GM12878 (cell line): ENCODE measurements at regions of chr19 and their contacts with region 1.

Region 1: DNA sequence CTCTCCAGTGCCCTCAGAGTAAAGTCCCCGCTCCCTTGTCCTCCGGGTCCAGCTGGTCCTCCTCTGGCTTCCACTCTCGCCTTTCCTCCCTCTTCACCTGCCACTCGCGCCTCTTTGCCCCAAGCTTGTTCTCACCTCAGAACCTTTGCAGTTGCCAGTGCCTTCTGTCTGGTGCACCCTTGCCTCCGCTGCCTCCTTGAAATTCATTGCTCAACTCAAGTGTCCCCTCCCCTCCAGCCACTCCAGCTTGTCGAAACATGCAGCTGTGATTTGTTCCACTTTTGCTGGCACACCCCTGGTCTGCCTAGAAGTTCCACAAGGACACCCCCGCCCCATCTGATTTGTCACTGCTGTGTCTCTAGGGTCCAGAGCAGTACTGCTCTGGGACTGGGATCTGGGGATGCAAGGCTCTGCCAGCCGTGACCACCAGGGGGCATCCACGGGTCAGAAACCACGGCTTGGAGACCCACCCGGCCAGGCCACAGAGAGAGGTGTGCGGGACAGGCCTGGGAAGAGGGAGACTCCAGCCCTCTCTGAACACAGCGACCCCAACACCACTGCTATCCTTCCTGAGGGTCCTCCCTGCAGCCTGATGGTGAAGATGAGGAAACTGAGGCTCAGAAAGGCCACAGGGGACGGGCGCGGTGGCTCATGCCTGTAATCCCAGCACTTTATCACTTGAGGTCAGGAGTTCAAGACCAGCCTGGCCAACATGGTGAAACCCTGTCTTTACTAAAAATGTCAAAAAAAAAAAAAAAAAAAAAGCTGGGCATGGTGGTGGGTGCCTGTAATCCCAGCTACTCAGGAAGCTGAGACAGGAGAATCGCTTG is 49.9 kb downstream of the AP1M1 start:
- DNase-seq: peak; percentile 28
- ATAC-seq: peak; percentile 99
- H3K4me3 ChIP-seq: no peak overlapping the region
- H3K27ac ChIP-seq: no peak overlapping the region
- H3K4me1 ChIP-seq: peaks cover 2% of the 10 kb centered on the region; the same call in 1 of the 2 replicates
- H3K27me3 ChIP-seq: no peaks in the 10 kb centered on the region
- CTCF ChIP-seq: peak; percentile 93 to 98 (median 97)
- EP300 ChIP-seq: no peak
- POLR2A ChIP-seq: no peak
- RAD21 ChIP-seq: peak; percentile 98

Region 2: DNA sequence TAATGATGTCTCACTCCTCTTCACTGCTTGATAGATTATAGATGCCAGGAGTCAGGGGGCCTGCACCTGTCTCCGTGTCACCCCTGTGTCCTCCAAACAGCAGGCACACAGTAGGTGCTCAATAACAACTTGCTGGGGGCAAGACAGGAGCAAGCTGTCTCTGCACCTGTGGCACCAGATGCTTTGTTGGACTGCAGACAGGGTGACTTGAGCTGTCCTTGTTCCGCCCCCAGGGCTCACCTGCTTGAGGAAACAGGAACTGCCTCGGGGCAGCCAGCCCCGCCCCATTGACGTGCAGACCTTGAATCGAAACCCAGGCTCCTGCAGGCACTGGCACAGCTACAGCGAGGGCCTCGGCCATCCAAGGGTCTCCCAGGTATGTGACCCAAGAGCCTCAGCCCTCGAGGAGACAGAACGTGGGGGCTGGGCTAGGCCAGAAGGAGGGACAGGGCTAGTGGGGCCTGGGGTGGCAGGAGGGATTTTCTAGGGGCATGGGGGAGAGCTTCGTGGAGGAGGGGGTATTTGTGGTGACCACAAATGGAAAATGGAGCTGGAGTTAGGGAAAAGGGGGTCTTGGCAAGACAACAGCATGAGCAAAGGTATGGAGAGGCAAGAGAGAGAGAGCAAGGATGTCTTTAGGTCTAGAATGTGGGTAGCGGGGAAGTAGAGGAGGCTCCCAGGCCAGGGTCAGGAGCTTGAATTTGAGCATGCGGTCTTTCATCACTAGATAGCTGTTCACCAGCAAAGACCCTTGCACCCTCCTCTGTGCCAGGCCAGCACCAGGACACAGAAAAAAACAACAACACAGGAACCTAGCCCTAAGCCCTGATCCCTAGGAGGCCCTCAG is 103.9 kb before region 1 on chr19 and contains the start of gene HSH2D:
- CTCF ChIA-PET with region 1: no interaction called
- POLR2A ChIA-PET with region 1: no interaction called
- RAD21 ChIA-PET with region 1: no interaction called
- SMC1A ChIA-PET with region 1: no interaction called
- in situ Hi-C with region 1: no loop called
- intact Hi-C with region 1: no loop called
- DNase-seq: peak; percentile 90
- ATAC-seq: peak; percentile 70
- H3K4me3 ChIP-seq: peak within 1 kb of the TSS; percentile 92
- H3K27ac ChIP-seq: peak within 1 kb of the TSS; percentile 99
- H3K4me1 ChIP-seq: peaks cover 37% of the 10 kb centered on the region
- H3K27me3 ChIP-seq: no peaks in the 10 kb centered on the region
- CTCF ChIP-seq: no peak
- EP300 ChIP-seq: peak in 1 of 2 experiments; percentile 81; a peak in 1 of 4 replicates
- POLR2A ChIP-seq: peak; percentile 97
- RAD21 ChIP-seq: no peak
- polyA plus RNA-seq, gene HSH2D: 22.0 to 27.2 TPM

Region 3: DNA sequence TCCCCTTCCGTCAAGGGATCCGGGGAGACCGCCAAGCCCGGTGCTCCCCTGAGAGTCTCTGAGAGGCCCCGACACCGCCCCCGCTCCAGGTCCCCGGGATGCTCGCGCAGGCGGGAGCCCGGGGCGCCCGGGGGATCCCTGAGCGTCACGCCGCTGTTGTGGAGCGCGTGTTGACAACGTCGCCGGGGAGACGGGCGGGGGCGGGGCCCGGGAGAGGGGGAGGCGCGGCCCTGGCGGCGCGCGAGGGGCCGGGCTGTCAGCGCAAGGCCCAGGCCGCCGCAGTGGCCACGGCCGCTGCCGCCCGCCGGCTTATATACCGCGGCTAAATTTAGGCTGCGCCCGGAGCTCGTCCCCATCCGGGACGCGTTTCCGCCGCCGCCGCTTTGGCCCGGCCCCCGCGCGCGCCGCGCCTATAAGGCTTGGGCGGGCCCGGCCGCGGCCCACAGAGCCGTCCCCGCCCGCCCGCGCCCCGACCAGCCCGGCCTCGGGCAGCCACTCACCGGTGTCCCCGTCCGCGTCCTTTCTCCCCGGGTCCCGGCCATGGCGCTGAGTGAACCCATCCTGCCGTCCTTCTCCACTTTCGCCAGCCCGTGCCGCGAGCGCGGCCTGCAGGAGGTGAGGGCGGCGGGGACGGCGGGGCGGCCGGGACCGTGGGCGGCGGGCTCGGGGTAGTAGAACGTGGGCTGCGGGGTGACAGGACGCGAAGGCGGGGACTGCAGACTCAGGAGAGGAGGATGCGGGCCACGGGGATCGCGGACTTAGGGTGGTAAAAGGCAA is 77.0 kb after region 1 on chr19 and contains the start of gene KLF2:
- CTCF ChIA-PET with region 1: interaction called, 26 read pairs
- POLR2A ChIA-PET with region 1: no interaction called
- RAD21 ChIA-PET with region 1: interaction called, 11 read pairs
- SMC1A ChIA-PET with region 1: interaction called, 11 read pairs
- in situ Hi-C with region 1: loop called (anchors 5 kb)
- intact Hi-C with region 1: loop called (anchors 5 kb)
- DNase-seq: no peak
- ATAC-seq: peak; percentile 76
- H3K4me3 ChIP-seq: peak within 1 kb of the TSS; percentile 76; the same call in 1 of the 2 replicates
- H3K27ac ChIP-seq: no peak within 1 kb of the TSS
- H3K4me1 ChIP-seq: peaks cover 25% of the 10 kb centered on the region
- H3K27me3 ChIP-seq: peaks cover 0 to 5% of the 10 kb centered on the region in 2 experiments; a peak in 1 of 4 replicates
- CTCF ChIP-seq: no peak
- EP300 ChIP-seq: peak in 1 of 2 experiments; percentile 72; a peak in 2 of 4 replicates
- POLR2A ChIP-seq: peak; percentile 93
- RAD21 ChIP-seq: no peak
- polyA plus RNA-seq, gene KLF2: 0.16 to 0.71 TPM

Region 4: GRCh38 chr19:16330368-16330801 is 82.8 kb after region 1 on chr19:
- CTCF ChIA-PET with region 1: interaction called, 26 read pairs
- POLR2A ChIA-PET with region 1: no interaction called
- RAD21 ChIA-PET with region 1: interaction called, 11 read pairs
- SMC1A ChIA-PET with region 1: interaction called, 11 read pairs
- in situ Hi-C with region 1: loop called (anchors 5 kb)
- intact Hi-C with region 1: loop called (anchors 5 kb)
- DNase-seq: no peak
- ATAC-seq: peak; percentile 78
- H3K4me3 ChIP-seq: no peak overlapping the region
- H3K27ac ChIP-seq: no peak overlapping the region
- H3K4me1 ChIP-seq: peaks cover 33% of the 10 kb centered on the region
- H3K27me3 ChIP-seq: no peaks in the 10 kb centered on the region
- CTCF ChIP-seq: no peak
- EP300 ChIP-seq: no peak
- POLR2A ChIP-seq: peak; percentile 46; the same call in 1 of the 2 replicates
- RAD21 ChIP-seq: no peak

Region 5: GRCh38 chr19:16338470-16339360 is 91.1 kb after region 1 on chr19:
- CTCF ChIA-PET with region 1: interaction called, 19 read pairs
- POLR2A ChIA-PET with region 1: interaction called, 3 read pairs
- RAD21 ChIA-PET with region 1: interaction called, 6 read pairs
- SMC1A ChIA-PET with region 1: interaction called, 7 read pairs
- in situ Hi-C with region 1: no loop called
- intact Hi-C with region 1: no loop called
- DNase-seq: peak; percentile 59
- ATAC-seq: peak; percentile 69
- H3K4me3 ChIP-seq: peak overlapping the region; percentile 25; the same call in 1 of the 2 replicates
- H3K27ac ChIP-seq: peak overlapping the region; percentile 34; the same call in 1 of the 2 replicates
- H3K4me1 ChIP-seq: peaks cover 46% of the 10 kb centered on the region
- H3K27me3 ChIP-seq: no peaks in the 10 kb centered on the region
- CTCF ChIP-seq: no peak
- EP300 ChIP-seq: peak; percentile 76 to 84; a peak in 3 of 4 replicates
- POLR2A ChIP-seq: no peak
- RAD21 ChIP-seq: no peak

Region 6: GRCh38 chr19:16371540-16371986 is 124.0 kb after region 1 on chr19:
- CTCF ChIA-PET with region 1: interaction called, 11 read pairs
- POLR2A ChIA-PET with region 1: interaction called, 10 read pairs
- RAD21 ChIA-PET with region 1: interaction called, 4 read pairs
- SMC1A ChIA-PET with region 1: interaction called, 7 read pairs
- in situ Hi-C with region 1: no loop called
- intact Hi-C with region 1: no loop called
- DNase-seq: peak; percentile 79
- ATAC-seq: peak; percentile 86
- H3K4me3 ChIP-seq: peak overlapping the region; percentile 3; the same call in 1 of the 2 replicates
- H3K27ac ChIP-seq: peak overlapping the region; percentile 81
- H3K4me1 ChIP-seq: peaks cover 62% of the 10 kb centered on the region
- H3K27me3 ChIP-seq: no peaks in the 10 kb centered on the region
- CTCF ChIP-seq: no peak
- EP300 ChIP-seq: peak; percentile 49 to 97; a peak in 3 of 4 replicates
- POLR2A ChIP-seq: peak; percentile 55
- RAD21 ChIP-seq: no peak

Region 7: GRCh38 chr19:16417660-16418596 is 170.4 kb after region 1 on chr19:
- CTCF ChIA-PET with region 1: interaction called, 56 read pairs
- POLR2A ChIA-PET with region 1: no interaction called
- RAD21 ChIA-PET with region 1: interaction called, 7 read pairs
- SMC1A ChIA-PET with region 1: interaction called, 15 read pairs
- in situ Hi-C with region 1: no loop called
- intact Hi-C with region 1: loop called (anchors 1 kb)
- DNase-seq: no peak
- ATAC-seq: peak; percentile 99
- H3K4me3 ChIP-seq: no peak overlapping the region
- H3K27ac ChIP-seq: no peak overlapping the region
- H3K4me1 ChIP-seq: no peaks in the 10 kb centered on the region
- H3K27me3 ChIP-seq: no peaks in the 10 kb centered on the region
- CTCF ChIP-seq: peak; percentile 85 to 90 (median 89)
- EP300 ChIP-seq: no peak
- POLR2A ChIP-seq: no peak
- RAD21 ChIP-seq: peak; percentile 81

Region 8: GRCh38 chr19:16532440-16533234 is 285.1 kb after region 1 on chr19:
- CTCF ChIA-PET with region 1: no interaction called
- POLR2A ChIA-PET with region 1: no interaction called
- RAD21 ChIA-PET with region 1: no interaction called
- SMC1A ChIA-PET with region 1: no interaction called
- in situ Hi-C with region 1: no loop called
- intact Hi-C with region 1: no loop called
- DNase-seq: no peak
- ATAC-seq: no peak
- H3K4me3 ChIP-seq: no peak overlapping the region
- H3K27ac ChIP-seq: no peak overlapping the region
- H3K4me1 ChIP-seq: no peaks in the 10 kb centered on the region
- H3K27me3 ChIP-seq: no peaks in the 10 kb centered on the region
- CTCF ChIP-seq: no peak
- EP300 ChIP-seq: no peak
- POLR2A ChIP-seq: no peak; the same call in 1 of the 2 replicates
- RAD21 ChIP-seq: no peak